ENCODE measurements at regions of chr2 and their contacts with region 1.

Region 1: DNA sequence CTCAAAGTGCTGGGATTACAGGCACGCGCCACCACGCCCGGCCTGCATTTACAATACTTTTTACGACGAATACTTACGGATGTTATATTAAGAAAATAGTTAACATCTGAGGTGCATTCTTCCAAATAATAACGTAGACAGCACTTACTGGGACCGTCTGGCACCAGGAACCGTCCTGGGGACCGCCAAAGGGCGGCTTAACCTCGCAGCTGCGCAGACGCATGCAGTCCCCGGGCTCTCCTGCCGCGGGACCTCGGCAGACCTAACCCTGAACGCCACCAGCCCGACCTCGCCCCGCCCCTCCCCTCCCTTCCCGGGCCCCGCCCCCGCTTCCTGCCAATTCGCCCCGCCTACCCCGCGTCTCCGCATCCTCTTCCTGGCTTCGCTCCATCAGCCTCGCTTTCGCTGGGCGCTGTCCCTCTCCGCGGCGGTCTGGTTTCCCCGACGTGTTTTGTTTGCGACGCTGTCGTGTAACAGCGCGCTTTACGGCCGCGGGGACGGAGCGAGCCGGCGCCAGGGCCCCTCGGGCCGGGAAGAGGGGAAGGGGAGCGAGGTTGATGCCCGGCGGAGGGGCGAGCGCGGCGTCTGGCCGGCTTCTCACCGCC is at the start of gene CNOT11:
- DNase-seq: peak; percentile 97
- H3K4me3 Mint-ChIP-seq: peak within 1 kb of the TSS; percentile 99
- H3K27ac Mint-ChIP-seq: peak within 1 kb of the TSS; percentile 98
- H3K4me1 Mint-ChIP-seq: peaks cover 57% of the 10 kb centered on the region
- H3K27me3 Mint-ChIP-seq: no peaks in the 10 kb centered on the region
- total RNA-seq, gene CNOT11: 70.6 and 74.7 TPM in 2 replicates

Region 2: DNA sequence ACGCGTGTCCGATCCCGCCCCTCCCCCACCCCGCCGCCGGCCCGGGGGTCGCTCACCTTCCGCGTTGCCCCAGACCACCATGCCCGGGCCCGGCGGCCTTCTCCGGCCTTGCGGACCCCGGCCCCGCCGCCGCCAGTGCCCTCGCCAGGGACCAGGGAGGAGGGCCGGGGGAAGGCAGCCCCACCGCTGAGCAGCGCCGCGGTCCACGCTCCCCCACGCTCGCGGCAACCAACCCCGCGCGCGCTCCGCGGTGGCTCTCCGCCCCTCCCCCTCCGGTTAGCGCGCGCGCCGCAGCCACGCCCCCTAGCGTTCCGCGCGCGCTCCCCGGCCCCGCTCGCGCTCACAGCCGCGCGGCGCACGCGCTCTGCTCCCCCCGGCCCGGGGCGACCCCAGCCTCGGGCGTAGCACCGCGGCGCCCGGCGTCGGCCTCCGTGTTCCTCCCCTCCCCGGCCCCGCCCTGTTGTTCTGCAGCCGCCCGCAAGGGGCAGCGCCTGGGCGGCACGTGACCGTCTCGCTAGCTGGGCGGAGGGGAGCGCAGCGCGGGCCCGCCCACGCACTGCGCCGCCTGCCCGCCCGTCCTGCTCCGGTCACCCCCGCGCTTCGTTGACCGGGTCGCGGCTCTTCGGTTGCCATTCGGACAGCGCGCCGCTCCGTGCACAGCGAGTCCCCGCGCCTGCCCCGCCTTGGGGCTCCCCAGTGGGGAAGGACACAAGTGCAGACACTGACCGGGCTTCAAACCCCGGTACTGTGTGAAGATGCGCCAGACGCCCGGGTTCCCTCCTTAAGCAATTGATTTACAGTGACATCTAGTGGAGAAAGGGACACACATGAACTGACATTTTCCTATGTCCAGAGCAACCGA is 1762.5 kb before region 1 on chr2 and contains the start of gene REV1:
- intact Hi-C with region 1: loop called (anchors 10 kb)
- DNase-seq: peak; percentile 87
- H3K4me3 Mint-ChIP-seq: peak within 1 kb of the TSS; percentile 94
- H3K27ac Mint-ChIP-seq: peak within 1 kb of the TSS; percentile 97
- H3K4me1 Mint-ChIP-seq: peaks cover 35% of the 10 kb centered on the region
- H3K27me3 Mint-ChIP-seq: peaks cover 3% of the 10 kb centered on the region
- total RNA-seq, gene REV1: 49.6 and 53.7 TPM in 2 replicates

Region 3: DNA sequence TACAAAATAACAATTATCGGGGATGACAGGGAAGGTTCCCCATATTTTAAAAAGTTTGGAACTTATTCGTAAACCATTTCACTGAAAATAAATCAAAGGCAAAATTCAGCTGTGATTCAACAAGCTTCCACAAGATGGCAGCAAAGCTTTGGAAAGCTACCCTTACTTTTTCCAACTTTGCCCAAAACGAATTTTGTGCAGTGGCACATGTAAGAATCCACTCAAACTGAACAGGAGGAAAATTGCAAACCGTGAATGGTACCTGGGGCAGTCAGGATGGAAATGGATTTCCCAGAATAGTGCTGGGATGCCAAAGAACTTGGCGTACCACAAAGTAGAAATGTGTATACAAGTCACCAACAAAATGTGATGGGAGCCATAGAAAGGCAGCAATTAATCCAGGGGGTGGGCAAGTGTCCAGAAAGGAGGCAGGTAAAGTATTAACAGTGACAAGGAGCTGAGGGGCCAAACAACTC is 239.8 kb before region 1 on chr2:
- intact Hi-C with region 1: loop called (anchors 1 kb)
- DNase-seq: peak; percentile 19
- H3K4me3 Mint-ChIP-seq: no peak overlapping the region
- H3K27ac Mint-ChIP-seq: peak overlapping the region; percentile 41
- H3K4me1 Mint-ChIP-seq: peaks cover 36% of the 10 kb centered on the region
- H3K27me3 Mint-ChIP-seq: no peaks in the 10 kb centered on the region

Region 4: DNA sequence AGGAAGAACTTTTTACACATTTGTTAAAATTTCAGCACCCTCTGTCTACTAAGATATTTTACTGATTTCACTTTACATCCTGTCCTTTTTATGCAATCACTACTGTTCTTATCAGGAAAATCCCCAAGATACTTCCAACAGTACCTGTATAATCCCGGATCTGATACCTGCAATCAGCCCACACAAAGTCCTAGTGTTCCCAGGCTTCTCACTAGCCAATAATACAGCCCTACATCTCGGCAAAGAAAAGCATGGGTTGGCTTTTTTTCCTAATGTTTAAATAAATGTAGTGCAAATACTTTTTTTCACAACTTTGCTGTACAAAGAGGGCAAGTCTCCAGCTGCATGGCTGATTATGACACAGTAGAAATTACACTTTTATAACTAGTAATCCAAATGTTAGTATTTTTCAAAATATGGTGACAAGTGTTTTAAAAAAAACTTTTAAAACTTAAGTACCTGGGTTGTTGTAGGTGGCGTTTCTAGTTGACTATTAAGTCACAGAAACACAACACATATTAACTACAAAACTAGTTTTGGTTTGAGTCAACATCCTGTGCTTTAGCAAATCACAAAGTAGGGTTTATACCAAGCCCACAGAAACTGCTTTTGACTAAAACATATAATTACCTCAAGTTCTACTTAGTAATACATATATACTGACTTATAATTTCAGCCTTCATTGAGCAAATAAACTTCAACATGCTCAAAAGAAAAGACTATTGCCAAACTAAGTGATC is 19.7 kb after region 1 on chr2:
- intact Hi-C with region 1: loop called (anchors 1 kb)
- DNase-seq: no peak
- H3K4me3 Mint-ChIP-seq: peak overlapping the region; percentile 59
- H3K27ac Mint-ChIP-seq: peak overlapping the region; percentile 81
- H3K4me1 Mint-ChIP-seq: peaks cover 48% of the 10 kb centered on the region
- H3K27me3 Mint-ChIP-seq: no peaks in the 10 kb centered on the region

Region 5: GRCh38 chr2:101473911-101474701 is 221.6 kb after region 1 on chr2:
- intact Hi-C with region 1: loop called (anchors 1 kb)
- DNase-seq: peak; percentile 52
- H3K4me3 Mint-ChIP-seq: peak overlapping the region; percentile 84
- H3K27ac Mint-ChIP-seq: peak overlapping the region; percentile 86
- H3K4me1 Mint-ChIP-seq: peaks cover 62% of the 10 kb centered on the region
- H3K27me3 Mint-ChIP-seq: no peaks in the 10 kb centered on the region

Region 6: GRCh38 chr2:102103992-102104871 is 851.7 kb after region 1 on chr2:
- intact Hi-C with region 1: loop called (anchors 2 kb)
- DNase-seq: peak; percentile 22
- H3K4me3 Mint-ChIP-seq: peak overlapping the region; percentile 72
- H3K27ac Mint-ChIP-seq: peak overlapping the region; percentile 13
- H3K4me1 Mint-ChIP-seq: peaks cover 24% of the 10 kb centered on the region
- H3K27me3 Mint-ChIP-seq: peaks cover 17% of the 10 kb centered on the region

Region 7: DNA sequence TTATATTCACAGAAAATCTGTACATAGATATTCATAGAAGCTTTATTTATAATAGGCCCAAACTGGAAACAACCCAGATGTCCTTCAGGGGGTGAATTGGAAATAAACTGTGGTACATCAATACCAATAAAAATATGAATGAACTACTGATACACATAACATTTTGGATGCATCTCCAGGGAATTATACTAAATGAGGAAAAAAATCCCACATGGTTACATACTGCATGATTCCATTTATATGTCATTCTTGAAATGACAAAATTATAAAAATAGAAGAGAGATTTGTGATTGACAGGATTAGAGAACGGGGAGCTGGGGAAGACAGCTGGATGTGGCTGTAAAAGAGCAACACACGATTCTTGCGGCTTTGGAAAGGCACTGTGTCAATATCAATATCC is 1944.3 kb after region 1 on chr2:
- intact Hi-C with region 1: no loop called
- DNase-seq: no peak
- H3K4me3 Mint-ChIP-seq: no peak overlapping the region
- H3K27ac Mint-ChIP-seq: no peak overlapping the region
- H3K4me1 Mint-ChIP-seq: no peaks in the 10 kb centered on the region
- H3K27me3 Mint-ChIP-seq: no peaks in the 10 kb centered on the region